ENCODE measurements at regions of chr6 and their contacts with region 1.

Region 1: DNA sequence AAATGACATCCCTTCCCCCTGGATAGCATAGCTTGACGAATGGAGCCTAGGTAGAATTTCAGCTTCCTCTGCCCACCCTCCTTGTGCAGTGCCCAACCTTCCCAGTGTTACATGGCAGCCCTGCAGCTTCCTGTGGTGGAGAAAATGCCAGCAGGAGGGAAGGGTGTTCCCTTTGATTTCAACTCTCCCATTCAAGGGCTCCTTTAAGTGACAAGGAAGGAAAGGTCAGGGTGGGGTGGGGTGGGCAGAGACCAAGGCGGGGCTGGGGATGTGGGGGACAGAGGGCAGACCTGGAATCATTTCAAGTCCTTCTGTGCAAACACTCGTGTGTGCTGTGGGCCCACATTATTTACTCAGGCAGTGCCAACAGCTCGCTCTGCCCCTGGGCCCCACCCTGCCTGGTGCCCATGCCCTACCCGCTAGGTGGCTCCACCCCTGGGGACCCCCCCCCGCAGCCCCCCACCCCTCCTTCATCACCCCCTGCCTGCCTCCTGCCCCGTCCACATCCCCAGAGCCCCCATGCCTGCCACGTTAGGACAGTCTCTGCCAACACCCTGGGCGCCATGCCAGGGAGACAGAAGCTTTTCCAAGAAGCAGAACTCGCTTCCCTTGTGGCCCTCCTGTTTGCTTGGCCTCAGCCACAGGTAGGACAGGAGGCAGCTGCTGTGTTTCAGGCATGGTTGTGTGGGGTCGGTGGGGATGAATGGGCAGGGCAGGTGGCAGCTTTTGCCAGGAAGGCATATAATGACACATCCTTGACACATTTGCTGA is 9.4 kb downstream of the SPDEF start:
- DNase-seq: peak; percentile 92
- ATAC-seq: peak; percentile 64
- H3K4me3 ChIP-seq: peak overlapping the region; percentile 48
- H3K27ac ChIP-seq: peak overlapping the region; percentile 94
- H3K4me1 ChIP-seq: peaks cover 59% of the 10 kb centered on the region
- H3K27me3 ChIP-seq: no peaks in the 10 kb centered on the region
- CTCF ChIP-seq: no peak

Region 2: DNA sequence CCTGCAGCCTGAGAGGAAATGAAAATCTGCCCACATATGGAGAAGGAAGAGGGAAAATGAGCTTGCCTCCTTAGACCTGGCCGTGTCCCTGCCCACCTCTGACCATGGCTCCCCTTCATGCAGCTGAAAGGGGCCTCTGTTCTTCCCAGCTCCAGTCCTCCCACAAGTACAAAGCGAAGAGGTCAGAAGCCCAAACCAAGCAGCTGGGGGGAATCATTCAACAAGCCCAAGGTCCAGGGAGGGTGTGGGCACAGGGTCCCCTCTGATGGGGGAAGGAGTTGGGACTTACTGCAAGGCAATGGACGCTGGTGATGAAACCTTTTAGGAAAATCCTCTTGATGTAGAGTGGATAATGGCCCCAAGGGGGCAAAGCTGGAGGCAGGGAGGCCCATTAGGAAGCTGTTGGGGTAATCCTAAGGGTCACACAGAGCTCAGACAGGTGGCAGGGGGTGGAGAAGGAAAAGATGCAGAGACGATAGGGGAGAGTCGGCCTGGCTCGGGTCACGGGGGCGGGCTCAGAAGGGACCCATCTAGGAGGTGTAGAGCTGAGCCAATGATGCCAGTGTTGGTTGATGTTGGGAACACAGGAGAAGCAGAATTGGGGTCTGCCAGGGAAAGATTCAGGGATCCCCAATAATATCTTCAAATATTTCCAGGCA is 384.8 kb before region 1 on chr6:
- CTCF ChIA-PET with region 1: interaction called, 10 read pairs
- POLR2A ChIA-PET with region 1: no interaction called
- intact Hi-C with region 1: no loop called
- DNase-seq: no peak
- ATAC-seq: no peak
- H3K4me3 ChIP-seq: no peak overlapping the region
- H3K27ac ChIP-seq: no peak overlapping the region
- H3K4me1 ChIP-seq: no peaks in the 10 kb centered on the region
- H3K27me3 ChIP-seq: no peaks in the 10 kb centered on the region
- CTCF ChIP-seq: no peak

Region 3: GRCh38 chr6:34583461-34583860 is 36.7 kb after region 1 on chr6:
- CTCF ChIA-PET with region 1: no interaction called
- POLR2A ChIA-PET with region 1: interaction called, 14 read pairs
- intact Hi-C with region 1: no loop called
- DNase-seq: no peak
- ATAC-seq: peak; percentile 43
- H3K4me3 ChIP-seq: no peak overlapping the region
- H3K27ac ChIP-seq: no peak overlapping the region
- H3K4me1 ChIP-seq: no peaks in the 10 kb centered on the region
- H3K27me3 ChIP-seq: no peaks in the 10 kb centered on the region
- CTCF ChIP-seq: peak; percentile 47